ENCODE measurements at regions of chr15 and their contacts with region 1.

Region 1: DNA sequence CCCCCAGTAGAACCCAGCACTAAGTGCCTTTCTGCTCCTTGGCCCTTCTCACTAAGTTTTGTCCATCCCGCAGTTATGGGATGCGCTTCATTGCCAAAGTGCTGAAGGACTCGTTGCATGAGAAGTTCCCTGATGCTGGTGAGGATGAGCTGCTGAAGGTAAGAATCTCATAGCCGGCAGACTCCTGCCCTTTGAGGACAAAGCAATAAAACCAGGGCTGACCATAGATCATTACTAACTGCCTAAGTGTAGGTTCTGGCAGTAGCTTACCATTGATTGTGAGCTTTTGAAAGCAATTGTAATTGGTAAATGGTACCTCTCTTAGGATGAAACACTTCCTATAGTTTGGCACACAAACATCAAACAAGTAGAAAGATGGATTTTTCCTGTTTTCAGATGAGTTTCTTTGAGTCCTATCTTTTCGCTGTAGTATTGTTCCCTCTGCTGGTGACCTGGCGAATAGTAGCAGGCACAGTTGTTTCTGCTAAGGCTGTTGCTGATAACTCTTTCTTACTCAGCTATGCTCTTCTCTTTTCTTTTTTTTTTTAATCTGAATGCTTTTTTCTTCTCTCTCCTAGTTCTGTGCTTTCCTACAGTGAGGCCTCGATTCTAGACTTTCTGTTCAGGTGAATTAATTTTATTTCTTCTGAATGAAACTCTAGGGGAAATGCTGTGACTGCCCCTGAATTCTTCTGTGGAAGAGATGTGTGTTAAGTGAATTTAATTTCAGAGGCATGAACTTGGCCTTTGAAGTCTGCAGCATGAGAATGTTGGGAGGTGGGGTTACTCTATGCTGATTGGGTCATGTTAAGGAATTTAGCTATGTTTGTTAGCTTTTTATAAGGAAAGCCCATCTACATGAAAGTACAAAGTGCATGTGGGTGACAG is 47.4 kb upstream of the CRTC3 start:
- DNase-seq: no peak
- ATAC-seq: peak; percentile 48 to 58
- H3K4me3 ChIP-seq: no peak overlapping the region
- H3K27ac ChIP-seq: no peak overlapping the region
- H3K4me1 ChIP-seq: no peaks in the 10 kb centered on the region
- H3K27me3 ChIP-seq: no peaks in the 10 kb centered on the region

Region 2: GRCh38 chr15:90211431-90212143 is 270.8 kb before region 1 on chr15:
- intact Hi-C with region 1: no loop called
- DNase-seq: peak; percentile 59 to 79 (median 71)
- ATAC-seq: peak; percentile 55 to 77
- H3K4me3 ChIP-seq: no peak overlapping the region
- H3K27ac ChIP-seq: peak overlapping the region; percentile 34
- H3K4me1 ChIP-seq: peaks cover 2% of the 10 kb centered on the region
- H3K27me3 ChIP-seq: no peaks in the 10 kb centered on the region

Region 3: GRCh38 chr15:90320061-90320884 is 162.1 kb before region 1 on chr15:
- intact Hi-C with region 1: loop called (anchors 1 to 10 kb)
- DNase-seq: peak; percentile 81 to 89 (median 89)
- ATAC-seq: peak; percentile 89
- H3K4me3 ChIP-seq: no peak overlapping the region
- H3K27ac ChIP-seq: no peak overlapping the region
- H3K4me1 ChIP-seq: peaks cover 2% of the 10 kb centered on the region
- H3K27me3 ChIP-seq: no peaks in the 10 kb centered on the region

Region 4: GRCh38 chr15:90362936-90363212 is 119.5 kb before region 1 on chr15:
- intact Hi-C with region 1: loop called in 3 of 4 experiments (anchors 5 to 10 kb)
- DNase-seq: no peak
- ATAC-seq: peak; percentile 65 to 73
- H3K4me3 ChIP-seq: no peak overlapping the region
- H3K27ac ChIP-seq: peak overlapping the region; percentile 23
- H3K4me1 ChIP-seq: peaks cover 4% of the 10 kb centered on the region
- H3K27me3 ChIP-seq: no peaks in the 10 kb centered on the region

Region 5: GRCh38 chr15:90799639-90800170 is 317.3 kb after region 1 on chr15:
- intact Hi-C with region 1: no loop called
- DNase-seq: no peak
- ATAC-seq: no peak
- H3K4me3 ChIP-seq: no peak overlapping the region
- H3K27ac ChIP-seq: no peak overlapping the region
- H3K4me1 ChIP-seq: no peaks in the 10 kb centered on the region
- H3K27me3 ChIP-seq: no peaks in the 10 kb centered on the region

Region 6: GRCh38 chr15:90862964-90863778 is 380.8 kb after region 1 on chr15:
- intact Hi-C with region 1: no loop called
- DNase-seq: peak in 2 of 3 donors; percentile 51 to 62
- ATAC-seq: peak; percentile 48 to 57
- H3K4me3 ChIP-seq: no peak overlapping the region
- H3K27ac ChIP-seq: peak overlapping the region; percentile 3
- H3K4me1 ChIP-seq: peaks cover 2% of the 10 kb centered on the region
- H3K27me3 ChIP-seq: no peaks in the 10 kb centered on the region